ENCODE measurements at regions of chr3 and their contacts with region 1.

Region 1: DNA sequence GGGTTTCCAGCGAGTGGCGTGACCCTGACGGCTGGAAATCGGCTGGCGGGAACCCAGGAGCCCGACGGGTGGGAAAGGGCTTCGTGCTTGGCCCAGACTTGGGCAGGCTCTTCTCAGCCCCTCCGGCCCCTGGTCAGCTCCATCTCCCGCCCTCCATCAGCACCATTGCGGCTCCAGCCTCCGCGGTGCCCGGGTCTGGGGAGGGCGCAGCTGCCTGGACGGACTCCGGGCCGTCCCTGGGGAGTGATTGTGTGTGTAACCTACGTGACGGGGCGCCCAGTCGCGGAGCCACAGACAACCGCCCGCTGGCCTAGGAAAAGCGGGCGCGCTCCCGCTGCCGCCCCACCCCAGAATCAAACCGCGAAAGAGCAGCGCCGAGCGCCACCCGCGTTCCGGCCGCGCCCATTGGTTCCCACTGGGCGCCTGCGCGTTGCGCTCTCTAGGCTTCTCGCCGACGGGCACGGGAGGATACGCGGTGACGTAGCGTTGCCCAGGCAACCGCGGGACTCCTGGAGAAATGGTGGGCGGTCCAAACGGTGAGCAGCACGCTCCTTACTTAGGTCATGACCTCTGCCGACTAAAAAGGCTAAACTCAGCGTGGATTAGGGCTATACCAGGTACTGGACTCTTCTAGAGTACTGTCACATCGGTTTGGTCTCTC is at the start of gene CFAP20DC:
- DNase-seq: peak; percentile 96
- H3K4me3 ChIP-seq: peak within 1 kb of the TSS; percentile 49 to 87 (median 63)
- H3K27ac ChIP-seq: peak within 1 kb of the TSS; percentile 95
- H3K4me1 ChIP-seq: peaks cover 15% of the 10 kb centered on the region
- H3K27me3 ChIP-seq: no peaks in the 10 kb centered on the region
- CTCF ChIP-seq: peak in 1 of 2 donors; percentile 2
- total RNA-seq, gene CFAP20DC: 3.0 to 9.9 TPM

Region 2: DNA sequence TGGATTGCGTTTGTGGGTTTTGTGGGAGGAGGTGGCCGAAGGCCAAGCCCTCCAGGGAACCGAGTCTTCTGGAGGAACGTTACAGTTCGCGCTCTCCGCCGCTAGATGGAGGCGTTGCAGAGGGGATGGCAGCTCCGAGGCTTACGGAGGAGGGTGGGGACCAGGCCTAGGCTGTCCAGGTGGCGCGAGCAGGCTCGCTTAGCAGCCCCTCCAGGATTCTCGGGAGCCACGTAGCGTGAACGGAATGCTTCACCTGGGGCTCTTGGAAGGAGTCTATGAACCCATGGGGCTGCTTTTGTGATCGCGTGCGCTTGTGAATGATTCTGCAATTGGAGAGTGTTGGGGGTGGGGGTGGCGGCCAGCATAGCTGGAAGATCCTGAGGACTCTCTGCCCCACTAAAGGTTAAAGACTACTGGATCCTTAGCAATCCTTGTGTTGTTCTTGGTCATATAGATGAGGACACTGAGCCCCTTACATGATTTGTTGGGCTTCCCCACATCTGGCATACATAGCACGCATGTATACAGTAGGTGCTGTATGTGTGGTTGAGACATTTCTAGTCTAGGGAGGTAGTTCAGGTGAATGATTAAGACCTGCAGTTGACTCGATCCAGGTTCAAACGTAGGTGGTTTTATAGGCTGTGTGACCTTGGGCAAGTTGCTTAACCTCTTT is 409.0 kb before region 1 on chr3:
- CTCF ChIA-PET with region 1: no interaction called
- dilution Hi-C with region 1: no loop called
- in situ Hi-C with region 1: no loop called
- intact Hi-C with region 1: loop called (anchors 1 kb)
- DNase-seq: peak; percentile 64
- H3K4me3 ChIP-seq: no peak overlapping the region
- H3K27ac ChIP-seq: no peak overlapping the region
- H3K4me1 ChIP-seq: peaks cover 10% of the 10 kb centered on the region
- H3K27me3 ChIP-seq: no peaks in the 10 kb centered on the region
- CTCF ChIP-seq: peak; percentile 75 to 96

Region 3: DNA sequence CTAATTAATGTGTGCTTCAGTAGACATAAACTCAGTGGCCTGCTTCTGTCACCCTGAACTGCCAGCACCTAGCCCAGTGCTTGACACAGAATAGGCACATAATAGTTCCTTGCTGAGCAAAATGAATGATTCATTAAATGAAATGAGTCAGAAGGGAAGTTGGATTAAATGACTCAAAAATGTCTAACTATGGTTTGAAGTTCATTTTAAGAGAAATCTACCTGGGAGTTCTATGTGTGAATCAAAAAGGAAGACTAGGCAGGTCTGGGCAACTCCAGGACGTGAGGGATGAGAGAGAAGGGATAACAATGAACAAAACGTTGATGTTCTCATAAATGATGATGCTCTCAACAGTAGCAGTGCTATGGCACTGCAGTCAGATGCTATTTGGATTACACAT is 175.0 kb before region 1 on chr3:
- CTCF ChIA-PET with region 1: no interaction called
- dilution Hi-C with region 1: no loop called
- in situ Hi-C with region 1: no loop called
- intact Hi-C with region 1: loop called (anchors 1 kb)
- DNase-seq: peak; percentile 98
- H3K4me3 ChIP-seq: no peak overlapping the region
- H3K27ac ChIP-seq: peak overlapping the region; percentile 96
- H3K4me1 ChIP-seq: peaks cover 52% of the 10 kb centered on the region
- H3K27me3 ChIP-seq: no peaks in the 10 kb centered on the region
- CTCF ChIP-seq: no peak

Region 4: DNA sequence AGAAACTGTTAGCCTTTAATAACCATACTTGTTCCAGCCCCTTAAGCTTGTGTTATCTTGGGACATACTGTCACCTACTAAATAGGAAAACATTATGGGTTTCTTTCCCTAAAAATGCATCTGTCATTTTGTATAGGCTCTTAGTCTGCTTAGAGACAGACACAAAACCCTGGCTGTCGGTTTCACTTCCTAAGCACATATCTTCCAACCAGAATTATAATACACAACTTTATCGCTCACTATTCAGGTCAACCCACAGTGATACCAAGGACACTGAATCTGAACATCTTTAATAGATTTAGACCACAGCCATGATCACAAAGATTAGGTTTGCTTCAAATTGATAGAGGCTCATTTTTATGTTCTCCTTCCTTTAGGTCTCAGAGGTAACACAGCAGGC is 111.7 kb before region 1 on chr3:
- CTCF ChIA-PET with region 1: no interaction called
- dilution Hi-C with region 1: no loop called
- in situ Hi-C with region 1: no loop called
- intact Hi-C with region 1: no loop called
- DNase-seq: no peak
- H3K4me3 ChIP-seq: no peak overlapping the region
- H3K27ac ChIP-seq: no peak overlapping the region
- H3K4me1 ChIP-seq: no peaks in the 10 kb centered on the region
- H3K27me3 ChIP-seq: no peaks in the 10 kb centered on the region
- CTCF ChIP-seq: no peak

Region 5: GRCh38 chr3:59143447-59143846 is 93.6 kb after region 1 on chr3:
- CTCF ChIA-PET with region 1: interaction called, 8 read pairs
- dilution Hi-C with region 1: no loop called
- in situ Hi-C with region 1: no loop called
- intact Hi-C with region 1: loop called (anchors 5 kb)
- DNase-seq: peak; percentile 30
- H3K4me3 ChIP-seq: no peak overlapping the region
- H3K27ac ChIP-seq: no peak overlapping the region
- H3K4me1 ChIP-seq: peaks cover 13% of the 10 kb centered on the region
- H3K27me3 ChIP-seq: no peaks in the 10 kb centered on the region
- CTCF ChIP-seq: peak; percentile 23 to 40

Measured in mammary epithelial cell (primary cell).